ENCODE measurements at regions of chr2 and their contacts with region 1.

Region 1: DNA sequence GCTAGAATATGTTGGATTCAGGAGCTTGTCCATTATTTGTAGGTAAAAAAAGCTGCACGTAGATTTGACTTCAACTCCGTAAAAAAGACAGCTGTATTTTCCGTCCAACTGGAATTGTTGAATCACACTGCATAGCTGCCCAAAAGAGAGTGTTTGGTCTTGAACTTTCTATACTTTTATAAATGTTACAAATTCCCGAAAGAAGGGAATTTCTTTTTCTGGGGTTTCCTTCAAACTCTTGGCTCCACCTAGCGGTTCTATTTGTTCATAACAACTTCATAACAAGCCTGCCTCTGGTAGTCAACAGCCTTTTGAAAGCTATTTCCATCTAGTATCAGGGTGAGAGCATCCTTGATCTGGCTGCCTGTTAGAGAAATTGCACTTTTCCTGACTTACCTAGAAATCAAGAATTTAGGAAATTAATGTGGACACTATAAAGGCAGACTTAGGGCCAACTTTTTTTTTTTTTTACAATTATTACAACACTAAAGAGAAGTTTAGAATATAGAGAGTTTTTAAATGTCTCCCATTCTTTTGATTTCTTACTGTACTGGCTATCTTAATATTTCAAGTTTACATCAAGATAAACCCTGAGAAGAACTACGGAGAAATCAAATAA is 48.1 kb downstream of the TMEM185B start:
- DNase-seq: peak in 1 of 10 donors; percentile 24
- H3K4me3 ChIP-seq: peak overlapping the region in 1 of 59 donors; percentile 26
- H3K27ac ChIP-seq: peak overlapping the region in 1 of 59 donors; percentile 10
- H3K27me3 ChIP-seq: no peaks in the 10 kb centered on the region
- CTCF ChIP-seq: peak; percentile 64 to 94 (median 82)

Region 2: DNA sequence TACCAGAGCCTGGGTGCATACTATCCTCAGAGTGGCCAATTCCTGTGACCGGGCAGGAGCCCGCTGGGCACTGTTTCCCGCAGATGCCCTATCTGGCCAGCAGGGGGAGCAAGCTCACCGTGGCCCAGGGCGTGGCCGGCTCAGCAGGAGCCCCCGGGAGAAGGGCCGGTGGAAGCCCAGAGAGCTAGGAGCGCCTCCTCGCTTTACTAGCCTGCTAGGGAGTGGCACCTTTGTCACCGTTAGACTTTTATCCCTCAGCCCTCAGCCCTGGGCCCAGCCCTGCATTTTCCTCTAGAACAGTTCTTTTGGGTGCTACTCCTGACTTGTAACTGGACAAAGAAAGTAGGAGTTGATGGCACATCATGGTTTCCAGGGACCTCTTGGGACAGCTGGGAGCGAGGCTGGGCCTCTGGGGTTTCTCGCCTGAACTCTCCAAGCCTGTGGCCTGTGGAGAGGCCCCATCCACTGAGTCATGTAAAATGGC is 472.1 kb before region 1 on chr2:
- intact Hi-C with region 1: loop called (anchors 5 kb)
- DNase-seq: peak in 9 of 10 donors; percentile 60 to 87 (median 69)
- H3K4me3 ChIP-seq: no peak overlapping the region
- H3K27ac ChIP-seq: peak overlapping the region in 2 of 59 donors; percentile 6 to 18
- H3K27me3 ChIP-seq: no peaks in the 10 kb centered on the region
- CTCF ChIP-seq: peak; percentile 71 to 99 (median 95)

Region 3: GRCh38 chr2:119838179-119838578 is 336.9 kb before region 1 on chr2:
- intact Hi-C with region 1: loop called in 1 of 2 experiments (anchors 10 kb)
- DNase-seq: peak in 2 of 10 donors; percentile 21 to 80
- H3K4me3 ChIP-seq: no peak overlapping the region
- H3K27ac ChIP-seq: peak overlapping the region in 1 of 59 donors; percentile 75
- H3K27me3 ChIP-seq: no peaks in the 10 kb centered on the region
- CTCF ChIP-seq: no peak

Region 4: DNA sequence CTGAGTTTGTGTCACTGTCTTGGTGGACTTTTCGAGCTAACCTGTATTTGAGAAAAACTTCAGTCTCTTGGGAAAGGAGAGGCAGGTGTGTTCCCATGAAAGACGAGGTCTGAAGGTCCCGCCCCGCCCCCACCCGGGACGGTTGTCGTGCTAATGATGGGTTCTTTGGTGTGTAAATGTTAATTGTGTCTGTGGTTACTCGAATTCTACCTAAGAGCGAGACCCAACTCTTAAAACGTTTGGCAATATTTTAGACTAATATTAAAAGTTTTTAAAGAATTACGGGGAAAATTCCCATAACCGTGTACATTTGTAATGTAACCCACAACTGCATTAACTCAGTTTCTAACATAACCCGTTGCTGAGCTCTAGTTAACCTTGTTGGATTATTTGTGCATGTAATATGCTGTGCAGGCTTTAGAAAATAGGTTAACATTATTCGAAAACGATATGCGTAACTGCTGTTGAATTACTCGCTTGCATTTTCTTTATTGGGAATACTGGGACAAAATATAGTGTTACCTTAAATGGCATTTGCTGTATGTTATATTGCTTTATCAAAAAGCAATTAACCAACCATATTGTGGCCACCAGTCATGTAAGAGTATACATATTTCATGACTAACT is 161.4 kb before region 1 on chr2:
- intact Hi-C with region 1: no loop called
- DNase-seq: no peak
- H3K4me3 ChIP-seq: peak overlapping the region; percentile 71 to 100 (median 96)
- H3K27ac ChIP-seq: peak overlapping the region in 38 of 59 donors; percentile 11 to 94 (median 78)
- H3K27me3 ChIP-seq: no peaks in the 10 kb centered on the region
- CTCF ChIP-seq: no peak

Region 5: GRCh38 chr2:120134263-120134662 is 40.8 kb before region 1 on chr2:
- intact Hi-C with region 1: no loop called
- DNase-seq: no peak
- H3K4me3 ChIP-seq: no peak overlapping the region
- H3K27ac ChIP-seq: no peak overlapping the region
- H3K27me3 ChIP-seq: no peaks in the 10 kb centered on the region
- CTCF ChIP-seq: no peak

Region 6: GRCh38 chr2:120223034-120223912 is 48.2 kb after region 1 on chr2 and contains the start of gene TMEM185B:
- intact Hi-C with region 1: loop called in 1 of 2 experiments (anchors 2 kb)
- DNase-seq: peak; percentile 80 to 95 (median 86)
- H3K4me3 ChIP-seq: peak within 1 kb of the TSS; percentile 61 to 90 (median 80)
- H3K27ac ChIP-seq: peak within 1 kb of the TSS in 57 of 59 donors; percentile 75 to 96 (median 90)
- H3K27me3 ChIP-seq: no peaks in the 10 kb centered on the region
- CTCF ChIP-seq: peak in 41 of 56 donors; percentile 5 to 65 (median 25)
- total RNA-seq, gene TMEM185B: 11.4 to 24.4 (median 15.6) TPM

Region 7: GRCh38 chr2:120312861-120313694 is 138.0 kb after region 1 on chr2:
- intact Hi-C with region 1: loop called in 1 of 2 experiments (anchors 5 kb)
- DNase-seq: peak; percentile 77 to 89 (median 84)
- H3K4me3 ChIP-seq: peak overlapping the region; percentile 23 to 73 (median 55)
- H3K27ac ChIP-seq: peak overlapping the region in 27 of 59 donors; percentile 8 to 80 (median 57)
- H3K27me3 ChIP-seq: no peaks in the 10 kb centered on the region
- CTCF ChIP-seq: peak; percentile 1 to 98 (median 93)

Measured in dorsolateral prefrontal cortex (tissue), 120 donors.